ENCODE measurements at regions of chr14 and their contacts with region 1.

Region 1: DNA sequence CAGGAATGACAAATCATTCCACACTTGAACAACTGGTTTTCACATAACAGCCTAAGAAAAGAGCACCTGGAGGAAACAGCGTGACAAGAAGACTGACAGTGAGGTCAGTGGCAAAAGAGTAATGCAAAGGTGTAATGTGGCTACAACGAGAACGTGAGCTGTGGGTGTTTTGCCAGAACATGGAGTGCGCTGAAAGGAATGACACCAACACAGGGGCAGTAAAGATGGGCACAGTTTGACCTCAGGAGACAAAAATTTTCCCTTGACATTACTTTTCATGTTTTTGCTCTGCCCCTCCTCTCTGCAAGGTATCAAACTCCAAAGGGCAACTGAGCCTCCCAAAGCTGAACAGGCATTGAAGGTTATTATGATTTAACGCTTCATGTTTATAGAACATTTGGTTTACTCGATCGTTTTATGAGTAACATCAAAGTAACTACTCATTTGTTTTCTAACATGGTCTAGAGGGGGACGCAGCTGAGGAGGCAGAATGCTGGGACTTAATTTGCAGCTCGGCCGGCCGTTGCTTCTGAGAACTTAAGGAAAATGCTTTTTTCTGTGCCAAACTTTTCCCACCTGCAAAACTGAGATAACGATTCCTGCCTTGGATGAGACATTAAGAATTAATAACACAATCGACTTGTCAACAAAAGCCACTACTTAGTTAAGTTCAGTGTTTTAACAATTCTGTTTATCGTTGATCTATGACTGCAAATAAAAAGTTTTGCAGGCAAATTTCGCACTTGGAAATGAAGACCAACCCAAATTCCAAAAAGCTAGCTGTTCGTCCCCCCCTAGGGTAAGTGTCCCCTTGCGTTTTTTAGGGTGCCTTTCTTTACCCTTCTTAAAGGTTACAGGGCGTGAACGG is 954 bp downstream of the HAUS4 start:
- DNase-seq: no peak
- ATAC-seq: no peak
- H3K4me3 Mint-ChIP-seq: peak overlapping the region; percentile 95
- H3K27ac Mint-ChIP-seq: peak overlapping the region; percentile 92
- H3K4me1 Mint-ChIP-seq: peaks cover 29% of the 10 kb centered on the region
- H3K27me3 Mint-ChIP-seq: no peaks in the 10 kb centered on the region

Region 2: GRCh38 chr14:22918804-22919600 is 36.9 kb before region 1 on chr14 and contains the start of gene RBM23:
- CTCF ChIA-PET with region 1: interaction called, 3 read pairs
- POLR2A ChIA-PET with region 1: interaction called, 17 read pairs
- DNase-seq: peak; percentile 100
- ATAC-seq: peak; percentile 96
- H3K4me3 Mint-ChIP-seq: peak within 1 kb of the TSS; percentile 88
- H3K27ac Mint-ChIP-seq: peak within 1 kb of the TSS; percentile 98
- H3K4me1 Mint-ChIP-seq: peaks cover 35% of the 10 kb centered on the region
- H3K27me3 Mint-ChIP-seq: no peaks in the 10 kb centered on the region
- total RNA-seq, gene RBM23: 77.1 to 81.2 TPM